AG04450 (cell line): ENCODE measurements at regions of chr12 and their contacts with region 1.

Region 1: DNA sequence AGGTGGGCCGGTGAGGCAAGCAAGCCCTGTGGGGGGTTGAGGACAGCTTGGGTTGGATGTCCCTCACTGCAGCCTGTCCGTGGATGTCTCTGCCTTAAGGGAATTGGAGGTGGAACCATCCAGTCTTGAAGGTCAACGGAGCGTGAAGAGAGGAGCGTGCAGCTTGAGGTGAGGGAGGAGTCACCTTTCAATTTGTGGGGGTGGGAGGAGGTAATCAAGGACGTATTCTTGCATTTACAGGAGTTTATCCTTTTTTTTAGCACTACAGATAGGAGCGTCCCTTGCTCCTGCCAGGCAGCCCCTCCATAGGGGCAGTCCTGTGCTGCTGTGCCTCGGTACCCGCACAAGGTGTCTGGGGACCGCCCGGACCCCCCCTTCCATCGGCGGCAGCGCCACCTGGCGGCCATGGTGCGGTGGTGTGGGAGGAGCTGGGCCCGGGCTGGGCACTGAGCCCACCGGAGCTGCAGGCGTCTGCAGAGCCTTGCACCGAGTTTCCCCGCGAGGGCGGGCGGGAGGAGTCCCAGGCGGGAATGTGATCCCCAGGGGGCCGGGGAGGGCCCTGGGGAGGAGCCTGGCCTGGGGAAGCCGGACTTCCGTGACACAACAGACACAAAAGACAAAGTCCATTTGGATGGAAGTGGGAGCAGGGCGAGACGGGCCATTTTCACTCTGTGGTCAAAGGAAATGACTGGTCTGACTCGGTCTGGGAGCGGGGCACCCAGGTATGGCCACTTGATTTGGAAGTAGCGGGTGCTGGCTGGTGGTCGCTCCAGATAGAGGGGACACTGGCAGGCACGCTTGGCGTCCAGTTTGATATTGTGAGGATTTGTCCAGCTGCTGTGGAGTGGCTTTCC is 923 bp downstream of the DNAJC22 start:
- DNase-seq: peak; percentile 77
- H3K4me3 ChIP-seq: peak overlapping the region; percentile 66
- H3K27ac ChIP-seq: peak overlapping the region; percentile 39
- H3K27me3 ChIP-seq: peaks cover 44% of the 10 kb centered on the region
- CTCF ChIP-seq: peak; percentile 87

Region 2: DNA sequence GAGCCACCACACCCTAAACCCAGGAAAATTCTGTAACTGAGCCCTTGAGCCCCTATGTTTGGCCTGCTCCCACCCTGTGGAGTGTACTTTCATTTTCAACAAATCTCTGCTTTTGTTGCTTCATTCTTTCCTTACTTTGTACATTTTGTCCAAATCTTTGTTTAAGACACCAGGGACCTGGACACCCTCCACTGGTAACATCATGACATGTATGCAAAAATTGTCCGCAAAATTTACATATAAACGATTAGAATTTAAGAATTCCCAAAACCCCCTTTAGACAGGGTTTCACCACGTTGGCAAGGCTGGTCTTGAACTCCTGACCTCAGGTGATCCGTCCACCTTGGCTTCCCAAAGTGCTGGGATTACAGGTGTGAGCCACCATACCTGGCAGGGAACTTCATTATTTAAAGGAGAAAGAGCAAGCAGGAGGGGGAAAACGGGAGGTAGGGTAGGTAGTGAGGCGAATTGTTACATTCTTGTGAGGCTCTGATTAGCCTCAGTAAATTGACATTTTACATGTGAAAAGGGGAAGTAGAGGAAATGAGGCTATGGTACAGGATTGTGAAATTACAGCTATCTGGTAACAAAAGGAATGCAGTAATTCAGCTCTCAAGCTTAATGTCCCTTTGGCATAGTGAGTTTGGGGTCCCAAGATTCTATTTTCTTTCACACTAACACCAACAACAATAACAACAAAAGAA is 186.4 kb before region 1 on chr12:
- CTCF ChIA-PET with region 1: no interaction called
- POLR2A ChIA-PET with region 1: no interaction called
- DNase-seq: no peak
- H3K4me3 ChIP-seq: no peak overlapping the region
- H3K27ac ChIP-seq: no peak overlapping the region
- H3K27me3 ChIP-seq: no peaks in the 10 kb centered on the region
- CTCF ChIP-seq: no peak

Region 3: GRCh38 chr12:49174218-49174617 is 173.4 kb before region 1 on chr12:
- CTCF ChIA-PET with region 1: no interaction called
- POLR2A ChIA-PET with region 1: no interaction called
- DNase-seq: no peak
- H3K4me3 ChIP-seq: no peak overlapping the region
- H3K27ac ChIP-seq: no peak overlapping the region
- H3K27me3 ChIP-seq: no peaks in the 10 kb centered on the region
- CTCF ChIP-seq: no peak

Region 4: GRCh38 chr12:49322708-49323523 is 24.7 kb before region 1 on chr12 and contains the start of gene TROAP:
- CTCF ChIA-PET with region 1: interaction called, 18 read pairs
- POLR2A ChIA-PET with region 1: interaction called, 3 read pairs
- DNase-seq: peak; percentile 95
- H3K4me3 ChIP-seq: peak within 1 kb of the TSS; percentile 84
- H3K27ac ChIP-seq: peak within 1 kb of the TSS; percentile 47
- H3K27me3 ChIP-seq: peaks cover 4% of the 10 kb centered on the region
- CTCF ChIP-seq: no peak
- polyA plus RNA-seq, gene TROAP: 7.6 and 10.3 TPM in 2 replicates

Region 5: GRCh38 chr12:49336645-49337584 is 10.7 kb before region 1 on chr12 and contains the start of gene C1QL4:
- CTCF ChIA-PET with region 1: interaction called, 52 read pairs
- POLR2A ChIA-PET with region 1: interaction called, 9 read pairs
- DNase-seq: no peak
- H3K4me3 ChIP-seq: peak within 1 kb of the TSS; percentile 52
- H3K27ac ChIP-seq: no peak within 1 kb of the TSS
- H3K27me3 ChIP-seq: peaks cover 72% of the 10 kb centered on the region
- CTCF ChIP-seq: peak; percentile 83
- polyA plus RNA-seq, gene C1QL4: 0.06 TPM in 1 of 2 replicates, not detected in the other